ENCODE measurements at regions of chr20 and their contacts with region 1.

Region 1: GRCh38 chr20:37095599-37096414 is at the start of gene RBL1:
- H3K4me3 Mint-ChIP-seq: peak within 1 kb of the TSS; percentile 96
- H3K27ac Mint-ChIP-seq: peak within 1 kb of the TSS; percentile 98
- H3K4me1 Mint-ChIP-seq: peaks cover 33% of the 10 kb centered on the region
- H3K27me3 Mint-ChIP-seq: no peaks in the 10 kb centered on the region

Region 2: GRCh38 chr20:37160683-37161082 is 64.9 kb after region 1 on chr20:
- intact Hi-C with region 1: no loop called
- H3K4me3 Mint-ChIP-seq: no peak overlapping the region
- H3K27ac Mint-ChIP-seq: no peak overlapping the region
- H3K4me1 Mint-ChIP-seq: no peaks in the 10 kb centered on the region
- H3K27me3 Mint-ChIP-seq: peaks cover 2% of the 10 kb centered on the region

Region 3: GRCh38 chr20:37178839-37179670 is 83.2 kb after region 1 on chr20 and contains the starts of genes MROH8 and RPN2:
- intact Hi-C with region 1: loop called (anchors 10 kb)
- H3K4me3 Mint-ChIP-seq: peak within 1 kb of the TSS; percentile 90
- H3K27ac Mint-ChIP-seq: peak within 1 kb of the TSS; percentile 99
- H3K4me1 Mint-ChIP-seq: peaks cover 38% of the 10 kb centered on the region
- H3K27me3 Mint-ChIP-seq: no peaks in the 10 kb centered on the region

Measured in dendritic cell treated with granulocyte-macrophage colony-stimulating factor and Interleukin-4, amounts not matched to agents 40 ng/mL and 50 ng/mL, for 4 days (primary cell).